Aorta (tissue), 5 donors: ENCODE measurements at regions of chr4 and their contacts with region 1.

Region 1: DNA sequence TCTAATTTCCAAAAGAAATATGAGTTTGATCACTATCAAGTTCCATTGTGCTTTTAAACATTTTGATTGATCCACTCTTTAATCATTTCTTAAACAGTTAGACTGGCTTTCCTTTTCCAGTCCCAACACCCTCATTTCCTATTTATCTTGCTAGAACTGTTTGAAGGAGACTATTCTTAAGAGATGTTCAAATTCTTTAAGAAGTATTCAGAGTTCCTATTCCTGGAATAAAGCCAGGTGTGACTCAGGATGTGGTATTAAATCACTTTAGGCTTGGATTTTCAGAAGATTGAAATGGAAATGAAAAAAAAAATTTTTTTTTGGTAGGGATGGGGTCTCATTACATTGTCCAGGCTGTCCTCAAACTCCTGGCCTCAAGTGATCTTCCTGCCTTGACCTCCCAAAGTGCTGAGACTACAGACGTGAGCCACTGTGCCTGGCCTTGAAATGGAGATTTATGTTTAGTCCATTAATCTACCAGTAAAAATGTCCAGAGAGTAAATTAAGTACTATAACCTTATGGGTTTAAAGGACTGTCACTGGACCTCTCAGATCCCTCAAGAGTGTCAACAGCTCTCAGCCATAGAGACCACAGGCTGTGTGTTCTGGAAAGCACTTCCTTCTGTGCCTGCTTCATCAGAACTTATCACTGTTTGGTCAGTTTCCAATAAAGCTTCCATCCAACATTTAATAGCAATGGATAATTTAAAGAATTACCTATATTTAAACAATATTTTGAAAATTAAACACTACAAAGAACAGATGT is 90.7 kb downstream of the CDS1 start:
- DNase-seq: no peak
- ATAC-seq: no peak
- H3K4me3 ChIP-seq: no peak overlapping the region
- H3K27ac ChIP-seq: peak overlapping the region in 1 of 2 donors; percentile 17
- H3K4me1 ChIP-seq: peaks cover 0 to 2% of the 10 kb centered on the region in 2 donors
- H3K27me3 ChIP-seq: no peaks in the 10 kb centered on the region

Region 2: GRCh38 chr4:84582302-84583000 is 91.2 kb before region 1 on chr4:
- intact Hi-C with region 1: loop called in 1 of 2 experiments (anchors 10 kb)
- DNase-seq: peak; percentile 85 to 93
- ATAC-seq: peak; percentile 85
- H3K4me3 ChIP-seq: peak overlapping the region; percentile 62 to 71
- H3K27ac ChIP-seq: no peak overlapping the region
- H3K4me1 ChIP-seq: no peaks in the 10 kb centered on the region
- H3K27me3 ChIP-seq: no peaks in the 10 kb centered on the region

Region 3: DNA sequence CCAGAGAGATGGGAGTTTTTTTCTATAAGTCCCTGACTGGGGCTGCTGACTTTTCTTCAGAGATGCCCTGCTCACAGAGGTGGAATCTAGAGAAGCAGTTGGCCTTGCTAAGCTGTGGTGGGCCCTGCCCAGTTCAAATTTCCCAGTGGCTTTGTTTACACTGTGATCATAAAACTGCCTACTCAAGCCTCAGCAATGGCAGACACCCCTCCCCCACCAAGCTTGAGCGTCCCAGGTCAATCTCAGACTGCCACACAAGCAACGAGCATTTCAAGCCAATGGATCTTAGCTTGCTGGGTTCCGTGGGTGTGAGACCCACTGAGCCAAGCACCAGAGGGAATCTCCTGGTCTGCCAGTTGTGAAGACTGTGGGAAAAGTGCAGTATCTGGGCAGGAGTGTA is 492.7 kb after region 1 on chr4:
- intact Hi-C with region 1: no loop called
- DNase-seq: no peak
- ATAC-seq: no peak
- H3K4me3 ChIP-seq: no peak overlapping the region
- H3K27ac ChIP-seq: no peak overlapping the region
- H3K4me1 ChIP-seq: no peaks in the 10 kb centered on the region
- H3K27me3 ChIP-seq: no peaks in the 10 kb centered on the region